CD4-positive, alpha-beta T cell (primary cell): ENCODE measurements at regions of chr13 and their contacts with region 1.

Region 1: GRCh38 chr13:99275093-99275469 is 16.9 kb upstream of the GPR18 start:
- DNase-seq: peak in 7 of 14 experiments; percentile 34 to 85 (median 65)
- ATAC-seq: peak; percentile 78
- H3K4me3 ChIP-seq: no peak overlapping the region
- H3K4me3 Mint-ChIP-seq: peak overlapping the region; percentile 49
- H3K27ac ChIP-seq: peak overlapping the region; percentile 16 to 49
- H3K27ac Mint-ChIP-seq: peak overlapping the region; percentile 87
- H3K4me1 ChIP-seq: peaks cover 65% of the 10 kb centered on the region
- H3K4me1 Mint-ChIP-seq: peaks cover 100% of the 10 kb centered on the region
- H3K27me3 ChIP-seq: no peaks in the 10 kb centered on the region
- H3K27me3 Mint-ChIP-seq: no peaks in the 10 kb centered on the region
- CTCF ChIP-seq: no peak

Region 2: GRCh38 chr13:99288089-99288488 is 13.0 kb after region 1 on chr13:
- CTCF ChIA-PET with region 1: interaction called, 13 read pairs
- POLR2A ChIA-PET with region 1: interaction called, 17 read pairs
- intact Hi-C with region 1: no loop called
- DNase-seq: no peak
- ATAC-seq: no peak
- H3K4me3 ChIP-seq: no peak overlapping the region
- H3K4me3 Mint-ChIP-seq: peak overlapping the region; percentile 55
- H3K27ac ChIP-seq: no peak overlapping the region
- H3K27ac Mint-ChIP-seq: peak overlapping the region; percentile 100
- H3K4me1 ChIP-seq: peaks cover 72% of the 10 kb centered on the region
- H3K4me1 Mint-ChIP-seq: peaks cover 96% of the 10 kb centered on the region
- H3K27me3 ChIP-seq: no peaks in the 10 kb centered on the region
- H3K27me3 Mint-ChIP-seq: no peaks in the 10 kb centered on the region
- CTCF ChIP-seq: no peak